ENCODE measurements at regions of chr18 and their contacts with region 1.

Region 1: GRCh38 chr18:8389391-8390340 is 219.6 kb upstream of the RAB12 start:
- DNase-seq: peak; percentile 56 to 59
- H3K4me3 ChIP-seq: no peak overlapping the region
- H3K27ac ChIP-seq: no peak overlapping the region
- H3K4me1 ChIP-seq: no peaks in the 10 kb centered on the region
- H3K27me3 ChIP-seq: no peaks in the 10 kb centered on the region
- CTCF ChIP-seq: peak; percentile 90

Region 2: GRCh38 chr18:7272311-7273049 is 1117.2 kb before region 1 on chr18:
- CTCF ChIA-PET with region 1: no interaction called
- POLR2A ChIA-PET with region 1: no interaction called
- intact Hi-C with region 1: loop called (anchors 2 kb)
- DNase-seq: peak; percentile 39 to 50
- H3K4me3 ChIP-seq: no peak overlapping the region
- H3K27ac ChIP-seq: no peak overlapping the region
- H3K4me1 ChIP-seq: no peaks in the 10 kb centered on the region
- H3K27me3 ChIP-seq: peaks cover 11% of the 10 kb centered on the region
- CTCF ChIP-seq: peak; percentile 67

Region 3: GRCh38 chr18:7677001-7677400 is 712.7 kb before region 1 on chr18:
- CTCF ChIA-PET with region 1: no interaction called
- POLR2A ChIA-PET with region 1: interaction called, 11 read pairs
- intact Hi-C with region 1: no loop called
- DNase-seq: no peak
- H3K4me3 ChIP-seq: no peak overlapping the region
- H3K27ac ChIP-seq: no peak overlapping the region
- H3K4me1 ChIP-seq: no peaks in the 10 kb centered on the region
- H3K27me3 ChIP-seq: no peaks in the 10 kb centered on the region
- CTCF ChIP-seq: no peak

Region 4: DNA sequence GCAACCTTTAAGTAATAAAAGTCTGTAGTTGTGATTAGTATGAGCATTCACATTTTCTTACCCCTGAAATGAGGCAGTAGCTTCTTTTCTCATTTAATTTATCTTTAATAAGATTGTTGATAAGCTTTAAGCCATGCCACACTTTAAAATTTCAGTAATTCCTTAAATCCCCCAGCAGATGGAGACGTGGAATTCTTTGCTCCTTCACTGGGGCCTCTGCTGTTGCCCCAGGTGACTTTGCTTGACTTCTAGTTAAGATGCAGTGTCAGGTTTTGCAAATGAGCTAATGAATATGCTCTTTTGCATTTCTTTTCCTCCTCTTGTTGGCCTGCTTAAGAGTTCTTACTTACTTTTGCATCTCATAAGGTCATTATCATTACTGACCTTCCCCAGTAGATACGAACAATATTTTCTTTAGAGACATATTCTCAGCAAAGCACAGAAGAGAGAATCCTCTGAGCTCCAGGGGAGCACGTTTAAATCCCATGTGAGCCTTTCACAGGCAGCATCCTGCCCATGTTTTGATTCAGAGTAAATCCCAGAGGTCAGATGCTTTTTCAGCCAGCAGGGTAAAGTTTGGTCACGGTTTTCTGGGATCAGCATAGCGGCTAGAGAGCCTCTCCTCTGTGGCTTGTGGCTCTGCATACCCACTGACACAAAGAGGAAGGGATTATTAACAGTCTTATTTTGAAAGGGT is 599.7 kb before region 1 on chr18:
- CTCF ChIA-PET with region 1: no interaction called
- POLR2A ChIA-PET with region 1: no interaction called
- intact Hi-C with region 1: loop called (anchors 1 kb)
- DNase-seq: peak in 1 of 2 experiments; percentile 25
- H3K4me3 ChIP-seq: no peak overlapping the region
- H3K27ac ChIP-seq: no peak overlapping the region
- H3K4me1 ChIP-seq: no peaks in the 10 kb centered on the region
- H3K27me3 ChIP-seq: no peaks in the 10 kb centered on the region
- CTCF ChIP-seq: peak; percentile 82

Measured in PC-9 (cell line).